ENCODE measurements at regions of chr1 and their contacts with region 1.

Region 1: GRCh38 chr1:180515864-180516388 is 13.5 kb upstream of the ACBD6 start:
- H3K4me3 ChIP-seq: no peak overlapping the region
- H3K27ac ChIP-seq: no peak overlapping the region
- H3K4me1 ChIP-seq: no peaks in the 10 kb centered on the region
- CTCF ChIP-seq: peak; percentile 74

Region 2: DNA sequence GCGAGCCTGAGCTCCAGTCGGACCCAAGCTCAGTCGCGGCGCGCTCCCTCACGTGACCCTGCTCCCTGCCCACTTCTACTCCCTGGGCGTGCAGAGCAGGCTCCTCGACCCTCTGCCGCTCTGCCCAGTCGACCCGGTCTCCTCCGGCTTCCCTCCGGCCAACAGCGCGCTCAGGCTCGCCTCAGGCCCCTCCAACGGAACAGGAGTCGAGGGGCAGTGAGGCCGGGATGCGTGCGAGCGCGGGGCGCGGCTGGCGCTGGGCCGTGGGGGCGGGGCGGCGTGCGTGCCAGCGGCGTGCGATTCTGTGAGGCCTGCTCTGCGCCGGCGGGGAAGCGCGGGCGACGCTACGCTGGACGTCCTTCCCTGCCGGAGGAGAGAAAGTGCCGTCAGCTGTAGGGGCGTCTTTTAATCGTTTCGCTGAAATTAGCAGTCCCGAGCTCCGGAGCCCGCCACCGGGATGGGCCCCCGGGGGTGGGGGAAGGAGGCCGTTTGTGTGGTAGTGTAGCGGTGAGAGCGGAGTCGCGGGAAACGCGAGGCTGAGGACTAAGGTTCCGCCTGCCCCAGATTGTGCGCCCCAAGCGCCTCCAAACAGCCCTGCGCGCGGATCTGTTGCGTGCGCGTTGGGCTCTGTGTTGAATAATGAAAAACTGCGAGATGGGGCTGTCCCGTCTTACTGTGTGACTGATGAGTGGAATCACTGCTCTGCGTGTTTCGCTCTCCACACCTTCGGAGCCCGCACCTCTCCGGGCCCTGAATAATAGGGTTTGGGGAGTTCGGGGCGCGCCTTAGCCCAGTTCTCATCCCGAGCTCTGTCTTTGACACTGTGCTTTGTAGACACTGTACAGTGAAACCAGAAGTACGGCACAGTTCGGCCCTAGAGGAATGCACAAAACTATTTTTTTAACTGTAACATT is 13.3 kb before region 1 on chr1 and contains the start of gene ACBD6:
- CTCF ChIA-PET with region 1: interaction called, 19 read pairs
- POLR2A ChIA-PET with region 1: interaction called, 10 read pairs
- H3K4me3 ChIP-seq: peak within 1 kb of the TSS; percentile 96
- H3K27ac ChIP-seq: peak within 1 kb of the TSS; percentile 92
- H3K4me1 ChIP-seq: no peaks in the 10 kb centered on the region
- CTCF ChIP-seq: peak; percentile 89

Region 3: GRCh38 chr1:180533266-180533987 is 17.5 kb after region 1 on chr1:
- CTCF ChIA-PET with region 1: interaction called, 16 read pairs
- POLR2A ChIA-PET with region 1: no interaction called
- H3K4me3 ChIP-seq: no peak overlapping the region
- H3K27ac ChIP-seq: no peak overlapping the region
- H3K4me1 ChIP-seq: no peaks in the 10 kb centered on the region
- CTCF ChIP-seq: 0 out of 2 replicates have a peak, but pooled peaks have one; percentile 7

Region 4: DNA sequence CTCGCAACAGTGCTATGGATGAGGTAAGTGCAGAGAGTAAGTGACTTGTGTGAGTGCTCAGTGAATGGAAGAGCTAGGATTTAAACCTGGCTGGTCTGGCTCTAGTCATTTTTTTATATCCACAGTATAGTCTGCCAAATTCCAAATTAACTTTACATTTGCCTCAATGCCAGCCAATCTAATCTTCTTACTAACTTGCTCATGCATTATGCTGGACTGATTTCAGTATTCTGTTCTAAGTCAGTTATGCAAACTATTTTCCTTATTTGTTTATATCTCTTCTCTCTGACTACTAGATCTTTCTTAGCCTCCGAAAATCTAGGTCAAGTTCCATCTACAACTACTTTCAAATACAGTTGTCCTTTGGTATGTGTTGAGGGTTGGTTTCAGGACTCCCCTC is 249.2 kb after region 1 on chr1:
- CTCF ChIA-PET with region 1: interaction called, 10 read pairs
- POLR2A ChIA-PET with region 1: no interaction called
- H3K4me3 ChIP-seq: no peak overlapping the region
- H3K27ac ChIP-seq: no peak overlapping the region
- H3K4me1 ChIP-seq: no peaks in the 10 kb centered on the region
- CTCF ChIP-seq: no peak

Measured in HEK293 (cell line).